Tibial artery (tissue), 4 donors: ENCODE measurements at regions of chr11 and their contacts with region 1.

Region 1: GRCh38 chr11:65180877-65181568 is 705 bp upstream of the CAPN1 start:
- DNase-seq: peak; percentile 29 to 75
- H3K4me3 ChIP-seq: peak overlapping the region; percentile 85 to 91
- H3K27ac ChIP-seq: peak overlapping the region; percentile 88 to 98
- H3K4me1 ChIP-seq: peaks cover 0 to 37% (median 23%) of the 10 kb centered on the region in 4 donors
- H3K27me3 ChIP-seq: no peaks in the 10 kb centered on the region
- CTCF ChIP-seq: peak; percentile 36 to 53

Region 2: GRCh38 chr11:64947208-64947814 is 233.7 kb before region 1 on chr11:
- intact Hi-C with region 1: no loop called
- DNase-seq: no peak
- H3K4me3 ChIP-seq: no peak overlapping the region
- H3K27ac ChIP-seq: no peak overlapping the region
- H3K4me1 ChIP-seq: no peaks in the 10 kb centered on the region
- H3K27me3 ChIP-seq: peaks cover 0 to 13% of the 10 kb centered on the region in 2 donors
- CTCF ChIP-seq: no peak

Region 3: GRCh38 chr11:65111744-65112414 is 69.1 kb before region 1 on chr11 and contains the start of gene TM7SF2:
- intact Hi-C with region 1: loop called (anchors 2 kb)
- DNase-seq: peak; percentile 95 to 96
- H3K4me3 ChIP-seq: peak within 1 kb of the TSS; percentile 44 to 59
- H3K27ac ChIP-seq: peak within 1 kb of the TSS; percentile 49 to 58
- H3K4me1 ChIP-seq: peaks cover 10 to 49% (median 46%) of the 10 kb centered on the region in 4 donors
- H3K27me3 ChIP-seq: no peaks in the 10 kb centered on the region
- CTCF ChIP-seq: no peak

Region 4: DNA sequence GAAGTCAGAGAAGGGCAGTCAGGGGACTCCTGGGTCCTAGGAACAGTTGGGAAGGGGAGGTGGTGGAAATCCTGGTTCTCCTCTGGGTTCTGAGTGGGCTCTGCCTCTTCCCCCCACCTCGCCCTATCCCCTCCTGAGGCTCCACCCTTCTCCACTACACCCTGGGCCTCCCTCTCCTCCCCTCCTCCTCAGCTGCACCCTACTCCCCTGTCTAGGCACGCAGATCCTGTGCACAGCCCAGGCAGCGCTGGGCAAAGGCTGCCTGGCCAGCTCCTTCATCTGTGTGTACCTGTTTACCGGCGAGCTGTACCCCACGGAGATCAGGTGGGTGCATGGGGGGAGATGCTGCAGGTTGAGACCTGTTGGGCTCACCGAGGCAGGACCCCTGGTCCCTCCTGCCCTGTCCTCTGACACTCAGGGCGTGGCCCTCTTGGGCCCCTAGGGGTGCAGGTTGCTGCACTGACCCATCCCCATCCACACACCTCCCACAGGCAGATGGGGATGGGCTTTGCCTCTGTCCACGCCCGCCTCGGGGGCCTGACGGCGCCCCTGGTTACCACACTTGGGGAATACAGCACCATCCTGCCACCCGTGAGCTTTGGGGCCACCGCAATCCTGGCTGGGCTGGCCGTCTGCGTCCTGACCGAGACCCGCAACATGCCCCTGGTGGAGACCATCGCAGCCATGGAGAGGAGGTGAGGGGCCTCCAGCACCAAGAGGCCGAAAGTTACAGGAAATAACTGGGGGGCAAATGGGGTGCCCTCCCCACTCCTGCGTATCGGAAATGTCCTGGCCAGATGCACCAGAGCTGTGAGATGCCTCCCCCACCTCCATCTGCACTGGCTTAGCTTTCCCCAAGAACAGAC is 55.4 kb after region 1 on chr11:
- intact Hi-C with region 1: no loop called
- DNase-seq: no peak
- H3K4me3 ChIP-seq: no peak overlapping the region
- H3K27ac ChIP-seq: no peak overlapping the region
- H3K4me1 ChIP-seq: no peaks in the 10 kb centered on the region
- H3K27me3 ChIP-seq: no peaks in the 10 kb centered on the region
- CTCF ChIP-seq: no peak

Region 5: GRCh38 chr11:65308281-65309093 is 127.5 kb after region 1 on chr11:
- intact Hi-C with region 1: no loop called
- DNase-seq: no peak
- H3K4me3 ChIP-seq: no peak overlapping the region
- H3K27ac ChIP-seq: no peak overlapping the region
- H3K4me1 ChIP-seq: peaks cover 0 to 7% (median 2%) of the 10 kb centered on the region in 4 donors
- H3K27me3 ChIP-seq: no peaks in the 10 kb centered on the region
- CTCF ChIP-seq: no peak